ENCODE measurements at regions of chr19 and their contacts with region 1.

Region 1: GRCh38 chr19:33040994-33041827 is 23.5 kb downstream of the RHPN2 start:
- DNase-seq: peak; percentile 100
- ATAC-seq: peak; percentile 95 to 96
- H3K4me3 ChIP-seq: peak overlapping the region; percentile 14; the same call in 2 of the 3 replicates
- H3K27ac ChIP-seq: peak overlapping the region; percentile 87 to 92
- H3K4me1 ChIP-seq: peaks cover 53% of the 10 kb centered on the region
- CTCF ChIP-seq: no peak
- EP300 ChIP-seq: peak; percentile 93 to 97
- POLR2A ChIP-seq: no peak
- RAD21 ChIP-seq: peak; percentile 37 to 76

Region 2: GRCh38 chr19:33000510-33000909 is 40.7 kb before region 1 on chr19:
- CTCF ChIA-PET with region 1: no interaction called
- POLR2A ChIA-PET with region 1: no interaction called
- DNase-seq: no peak
- ATAC-seq: no peak
- H3K4me3 ChIP-seq: no peak overlapping the region
- H3K27ac ChIP-seq: no peak overlapping the region
- H3K4me1 ChIP-seq: peaks cover 43% of the 10 kb centered on the region
- CTCF ChIP-seq: no peak
- EP300 ChIP-seq: no peak
- POLR2A ChIP-seq: no peak
- RAD21 ChIP-seq: no peak

Region 3: GRCh38 chr19:33029746-33030303 is 11.4 kb before region 1 on chr19:
- CTCF ChIA-PET with region 1: interaction called, 14 read pairs
- POLR2A ChIA-PET with region 1: no interaction called
- DNase-seq: peak in 1 of 2 experiments; percentile 57
- ATAC-seq: no peak
- H3K4me3 ChIP-seq: no peak overlapping the region
- H3K27ac ChIP-seq: no peak overlapping the region
- H3K4me1 ChIP-seq: peaks cover 35% of the 10 kb centered on the region
- CTCF ChIP-seq: no peak
- EP300 ChIP-seq: no peak
- POLR2A ChIP-seq: no peak
- RAD21 ChIP-seq: no peak

Region 4: DNA sequence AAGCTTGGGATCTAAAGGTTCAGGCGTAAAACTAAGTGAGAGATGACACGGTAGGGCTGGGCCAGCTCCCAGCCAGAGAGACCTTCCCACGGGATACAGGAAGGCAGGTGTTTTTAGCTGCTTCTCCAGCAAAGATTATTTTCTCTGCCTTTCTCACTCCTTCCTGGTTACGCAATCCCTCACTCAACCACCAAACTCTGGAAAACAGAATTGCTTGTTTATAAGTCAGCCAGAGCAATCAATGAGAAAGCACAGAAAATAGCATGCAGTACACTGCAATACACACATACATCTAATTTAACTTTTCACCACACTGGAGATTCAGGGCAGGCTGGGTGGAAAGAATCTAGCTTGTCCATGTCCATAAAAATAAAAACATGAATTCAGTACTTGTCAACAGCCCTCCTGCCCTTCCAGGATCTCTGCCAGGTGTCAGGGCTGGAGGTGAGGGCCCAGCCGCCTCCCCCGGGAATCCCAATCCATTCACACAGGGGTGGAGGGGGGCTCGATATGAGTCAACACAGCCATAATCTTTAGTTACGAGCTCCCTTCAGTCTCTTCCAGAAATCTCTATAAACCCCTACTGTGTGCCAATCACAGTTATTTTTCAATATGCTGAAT is 11.3 kb after region 1 on chr19:
- CTCF ChIA-PET with region 1: interaction called, 12 read pairs
- POLR2A ChIA-PET with region 1: interaction called, 13 read pairs
- DNase-seq: peak in 1 of 2 experiments; percentile 66
- ATAC-seq: peak; percentile 19 to 45
- H3K4me3 ChIP-seq: no peak overlapping the region
- H3K27ac ChIP-seq: peak overlapping the region; percentile 49 to 77
- H3K4me1 ChIP-seq: peaks cover 88% of the 10 kb centered on the region
- CTCF ChIP-seq: no peak
- EP300 ChIP-seq: no peak
- POLR2A ChIP-seq: no peak
- RAD21 ChIP-seq: no peak; a peak in 1 of 5 replicates

Measured in A549 (cell line).